PC-3 (cell line): ENCODE measurements at regions of chr2 and their contacts with region 1.

Region 1: GRCh38 chr2:101238930-101239759 is 13.5 kb upstream of the CNOT11 start:
- DNase-seq: peak; percentile 89
- ATAC-seq: peak; percentile 78
- H3K4me3 ChIP-seq: peak overlapping the region; percentile 58
- H3K27ac ChIP-seq: peak overlapping the region; percentile 61
- H3K4me1 ChIP-seq: peaks cover 22% of the 10 kb centered on the region
- H3K27me3 ChIP-seq: no peaks in the 10 kb centered on the region
- CTCF ChIP-seq: no peak

Region 2: GRCh38 chr2:101341901-101342624 is 102.9 kb after region 1 on chr2:
- CTCF ChIA-PET with region 1: no interaction called
- POLR2A ChIA-PET with region 1: interaction called, 16 read pairs
- intact Hi-C with region 1: no loop called
- DNase-seq: peak; percentile 90
- ATAC-seq: peak; percentile 87
- H3K4me3 ChIP-seq: no peak overlapping the region; the same call in 1 of the 2 replicates
- H3K27ac ChIP-seq: peak overlapping the region; percentile 35
- H3K4me1 ChIP-seq: peaks cover 42% of the 10 kb centered on the region
- H3K27me3 ChIP-seq: no peaks in the 10 kb centered on the region
- CTCF ChIP-seq: peak; percentile 92